Activated CD8-positive, alpha-beta memory T cell treated with anti-CD3 and anti-CD28 coated beads, Interleukin-2, amount 10 ng/mL, durations not matched to agents 7 days and 5 days (primary cell): ENCODE measurements at regions of chr7 and their contacts with region 1.

Region 1: DNA sequence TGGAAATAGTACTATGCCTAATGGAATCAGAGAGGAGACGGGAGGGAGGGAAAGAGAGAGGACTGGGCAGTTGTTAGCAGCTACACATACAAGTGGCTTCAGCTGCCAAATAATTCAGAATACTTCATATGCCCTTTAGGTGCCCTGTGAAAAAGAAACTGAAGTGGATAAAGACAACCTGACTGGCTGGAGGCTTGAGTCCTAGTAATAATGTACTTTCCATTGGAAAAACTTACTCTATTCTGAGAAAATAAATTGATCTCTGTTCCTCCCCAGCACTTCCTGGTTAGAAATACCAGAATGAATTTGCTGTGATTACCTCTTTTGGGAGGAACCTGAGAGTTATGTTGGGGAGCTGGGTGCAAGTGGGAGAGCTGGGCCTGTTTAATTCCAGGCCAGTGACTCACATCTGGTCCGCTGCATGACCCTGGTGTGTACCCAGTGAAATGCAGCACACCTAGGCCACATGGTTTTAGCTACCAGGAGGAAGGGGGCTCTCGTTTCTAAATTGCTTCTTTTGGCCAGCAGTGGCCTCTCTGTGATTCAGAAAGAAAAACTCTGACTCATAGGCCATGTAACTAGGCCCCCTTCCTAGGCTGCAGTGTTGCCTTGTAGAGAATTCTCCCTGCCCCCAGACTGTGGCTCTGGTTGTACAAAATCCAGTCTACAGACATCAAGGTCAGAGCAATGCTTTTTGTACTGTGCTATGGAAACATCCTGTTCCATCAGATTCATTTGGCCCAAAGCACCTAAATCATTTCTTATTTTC is 6.5 kb downstream of the AGFG2 start:
- DNase-seq: peak; percentile 81
- ATAC-seq: peak; percentile 67
- H3K4me3 Mint-ChIP-seq: peak overlapping the region; percentile 99
- H3K27ac Mint-ChIP-seq: peak overlapping the region; percentile 95
- H3K4me1 Mint-ChIP-seq: peaks cover 97% of the 10 kb centered on the region
- H3K27me3 Mint-ChIP-seq: no peaks in the 10 kb centered on the region

Region 2: DNA sequence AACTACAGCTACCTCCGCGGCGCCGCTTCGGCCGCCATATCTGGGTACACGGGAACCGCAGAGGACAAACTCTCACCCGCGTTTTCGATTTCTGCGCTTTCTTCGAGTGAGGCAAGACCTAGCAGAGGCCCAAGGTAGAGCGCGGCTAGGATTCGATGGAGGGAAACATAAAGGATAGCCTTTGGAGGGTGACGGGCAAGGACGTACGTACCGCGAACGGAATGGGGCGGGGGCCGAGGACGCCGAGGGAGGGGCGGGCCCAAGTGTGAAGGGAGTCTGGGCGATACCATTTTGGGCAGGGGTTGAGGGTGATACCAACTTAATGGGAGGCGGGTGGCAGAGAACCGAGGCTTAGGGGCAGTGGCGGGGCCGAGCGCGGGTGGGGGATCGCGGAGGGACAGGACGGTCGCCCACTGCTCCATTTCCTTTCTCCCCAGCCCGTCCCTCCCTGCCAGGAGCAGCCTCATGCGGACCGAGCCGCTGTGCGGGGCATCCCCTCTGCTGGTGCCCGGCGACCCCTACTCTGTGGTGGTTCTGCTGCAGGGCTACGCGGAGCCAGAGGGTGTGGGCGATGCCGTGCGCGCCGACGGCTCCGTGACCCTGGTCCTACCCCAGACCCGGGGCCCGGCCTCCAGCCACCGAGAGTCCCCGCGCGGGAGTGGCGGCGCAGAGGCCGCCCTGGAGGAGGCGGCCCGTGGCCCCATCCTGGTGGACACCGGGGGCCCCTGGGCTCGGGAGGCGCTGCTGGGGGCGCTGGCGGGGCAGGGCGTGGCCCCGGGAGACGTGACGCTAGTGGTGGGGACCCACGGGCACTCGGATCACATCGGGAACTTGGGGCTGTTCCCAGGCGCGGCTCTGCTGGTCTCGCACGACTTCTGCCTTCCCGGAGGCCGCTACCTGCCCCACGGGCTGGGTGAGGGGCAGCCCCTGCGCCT is 418.3 kb before region 1 on chr7 and contains the start of gene MBLAC1:
- CTCF ChIA-PET with region 1: no interaction called
- DNase-seq: peak; percentile 94
- ATAC-seq: peak; percentile 79
- H3K4me3 Mint-ChIP-seq: peak within 1 kb of the TSS; percentile 89
- H3K27ac Mint-ChIP-seq: peak within 1 kb of the TSS; percentile 98
- H3K4me1 Mint-ChIP-seq: peaks cover 41% of the 10 kb centered on the region
- H3K27me3 Mint-ChIP-seq: no peaks in the 10 kb centered on the region
- total RNA-seq, gene MBLAC1: 5.6 to 7.5 TPM

Region 3: DNA sequence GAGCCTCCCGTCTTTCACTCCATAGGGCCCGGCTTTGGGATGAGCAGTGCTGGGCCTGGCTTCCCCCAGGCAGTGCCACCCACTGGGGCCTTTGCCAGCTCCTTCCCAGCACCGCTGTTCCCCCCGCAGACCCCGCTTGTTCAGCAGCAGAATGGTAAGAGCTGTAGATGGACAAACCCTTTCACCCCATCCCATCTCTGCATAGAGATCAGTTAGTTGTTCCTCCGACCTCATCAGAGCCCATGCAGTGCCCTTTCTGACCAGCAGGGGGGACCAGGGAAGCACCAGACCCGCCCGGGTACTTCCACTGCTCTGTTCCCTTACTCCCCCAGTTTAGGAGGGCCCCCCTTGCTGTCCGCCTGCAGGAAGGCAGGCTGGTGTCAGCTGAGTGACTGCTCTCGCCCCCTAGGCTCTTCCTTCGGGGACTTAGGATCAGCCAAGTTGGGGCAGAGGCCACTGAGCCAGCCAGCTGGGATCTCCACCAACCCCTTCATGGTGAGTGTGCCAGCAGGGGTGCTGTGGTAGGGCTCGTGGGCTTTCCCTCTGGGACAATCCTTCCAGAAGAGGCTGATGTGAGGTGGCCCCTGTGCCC is 18.4 kb after region 1 on chr7:
- CTCF ChIA-PET with region 1: interaction called, 158 read pairs
- DNase-seq: peak; percentile 87
- ATAC-seq: peak; percentile 62
- H3K4me3 Mint-ChIP-seq: no peak overlapping the region
- H3K27ac Mint-ChIP-seq: peak overlapping the region; percentile 44
- H3K4me1 Mint-ChIP-seq: peaks cover 31% of the 10 kb centered on the region
- H3K27me3 Mint-ChIP-seq: no peaks in the 10 kb centered on the region